Mammary epithelial cell (primary cell): ENCODE measurements at regions of chr3 and their contacts with region 1.

Region 1: DNA sequence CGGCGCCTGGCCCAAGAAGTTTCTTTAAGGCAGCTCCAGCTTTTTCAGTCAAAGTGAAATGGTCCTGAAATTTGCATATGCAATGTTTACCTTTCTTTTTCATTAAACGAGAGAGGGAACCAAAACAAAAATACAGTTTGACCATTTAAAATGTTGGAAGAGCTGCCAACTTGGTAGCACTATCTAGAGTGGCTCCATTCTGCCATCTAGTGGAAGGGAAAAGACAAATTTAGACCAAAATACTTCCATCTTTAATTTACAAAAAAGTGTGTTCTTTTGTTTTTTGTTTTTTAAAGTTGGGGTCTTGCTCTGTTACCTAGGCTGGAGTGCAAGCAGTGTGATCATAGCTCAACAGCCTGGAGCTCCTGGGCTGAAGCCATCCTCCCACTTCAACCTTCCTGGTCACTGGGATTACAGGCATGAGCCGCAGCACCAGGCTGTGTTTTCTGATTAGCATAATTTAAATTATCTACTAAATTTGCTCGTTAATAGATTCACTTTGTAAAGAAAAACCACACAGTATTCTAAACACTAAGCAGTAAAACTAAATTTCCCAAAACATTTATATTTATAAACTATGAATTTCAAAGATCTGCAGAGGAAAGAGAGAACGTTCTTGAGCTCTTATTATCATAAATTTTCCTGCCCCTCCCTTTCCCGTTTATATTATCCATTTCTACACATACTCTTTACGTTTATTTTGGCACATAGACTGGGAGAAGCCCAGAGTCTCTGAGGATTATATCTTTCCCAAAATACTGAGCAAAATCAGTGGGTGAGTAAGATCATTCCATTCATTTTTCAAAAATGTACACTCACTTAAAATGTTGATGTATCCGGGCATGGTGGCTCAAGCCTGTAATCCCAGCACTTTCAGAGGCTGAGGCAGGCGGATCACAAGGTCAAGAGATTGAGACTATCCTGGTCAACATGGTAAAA is 15.4 kb upstream of the RFC4 start:
- DNase-seq: peak; percentile 24
- H3K4me3 ChIP-seq: no peak overlapping the region
- H3K27ac ChIP-seq: no peak overlapping the region
- H3K4me1 ChIP-seq: peaks cover 7% of the 10 kb centered on the region
- H3K27me3 ChIP-seq: no peaks in the 10 kb centered on the region
- CTCF ChIP-seq: peak; percentile 39 to 70

Region 2: GRCh38 chr3:186589121-186589520 is 232.6 kb before region 1 on chr3:
- CTCF ChIA-PET with region 1: no interaction called
- dilution Hi-C with region 1: no loop called
- in situ Hi-C with region 1: no loop called
- intact Hi-C with region 1: loop called (anchors 1 kb)
- DNase-seq: peak; percentile 36
- H3K4me3 ChIP-seq: no peak overlapping the region
- H3K27ac ChIP-seq: peak overlapping the region; percentile 81
- H3K4me1 ChIP-seq: peaks cover 32% of the 10 kb centered on the region
- H3K27me3 ChIP-seq: no peaks in the 10 kb centered on the region
- CTCF ChIP-seq: peak; percentile 33 to 49

Region 3: DNA sequence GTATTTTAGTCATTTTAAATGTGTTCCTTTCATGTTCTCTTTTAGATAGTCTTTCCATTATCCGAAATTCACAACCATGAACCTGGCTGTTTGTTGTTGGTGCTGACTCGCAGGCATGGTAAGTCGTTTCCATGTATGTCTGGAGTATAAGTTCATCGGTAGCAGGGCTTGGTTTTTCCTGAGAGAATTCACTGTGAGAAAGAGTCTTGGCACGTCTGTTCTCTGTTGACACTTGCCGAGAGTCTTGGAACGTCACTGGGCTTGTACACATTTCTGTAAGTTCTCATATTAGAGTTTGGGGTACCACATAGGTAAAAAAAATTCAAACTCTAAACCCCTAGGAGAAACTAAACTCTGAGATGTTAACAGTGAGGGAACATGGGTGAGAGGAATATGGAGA is 67.7 kb before region 1 on chr3:
- CTCF ChIA-PET with region 1: no interaction called
- dilution Hi-C with region 1: no loop called
- in situ Hi-C with region 1: no loop called
- intact Hi-C with region 1: loop called (anchors 2 kb)
- DNase-seq: no peak
- H3K4me3 ChIP-seq: no peak overlapping the region
- H3K27ac ChIP-seq: peak overlapping the region; percentile 83
- H3K4me1 ChIP-seq: peaks cover 15% of the 10 kb centered on the region
- H3K27me3 ChIP-seq: no peaks in the 10 kb centered on the region
- CTCF ChIP-seq: no peak